Heart right ventricle (tissue), 16 donors: ENCODE measurements at regions of chr21 and their contacts with region 1.

Region 1: DNA sequence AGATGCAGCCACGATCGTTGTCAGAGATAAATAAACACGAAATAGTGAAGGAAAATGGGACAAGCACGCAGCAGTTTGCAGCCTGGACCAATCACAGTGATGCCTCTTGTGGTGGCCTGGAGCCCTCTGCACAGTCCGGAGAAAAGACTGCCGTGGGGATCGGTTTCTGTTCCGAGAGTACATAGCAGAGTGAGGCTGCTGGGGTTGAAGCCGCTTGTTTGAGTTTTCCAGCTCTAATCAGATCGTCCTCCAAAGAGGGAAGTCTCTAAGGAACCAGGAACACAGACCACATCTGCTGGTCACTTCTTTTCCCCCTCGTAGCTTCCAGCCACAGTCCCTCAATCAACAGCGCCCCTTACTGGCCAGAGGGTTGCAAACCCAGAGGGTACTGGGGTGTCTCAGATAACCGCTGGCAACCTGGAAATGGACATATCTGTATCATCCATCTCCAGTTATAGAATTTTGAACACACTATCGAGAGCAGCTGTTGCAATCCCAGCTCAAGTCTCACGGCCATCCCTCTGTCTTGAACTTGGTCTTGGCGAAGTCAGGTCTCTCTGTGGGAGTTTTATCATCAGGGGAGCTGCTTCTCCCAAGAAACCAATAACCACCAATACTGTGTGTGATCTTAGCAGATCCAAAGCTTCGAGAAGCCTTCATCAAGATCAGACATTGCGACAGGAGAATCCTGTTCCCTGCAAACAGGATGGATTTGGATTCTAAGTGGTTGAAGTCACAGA is 57.4 kb downstream of the OLIG1 start:
- DNase-seq: peak; percentile 53 to 61
- ATAC-seq: peak; percentile 70 to 95 (median 90)
- H3K4me3 ChIP-seq: peak overlapping the region in 7 of 10 donors; percentile 21 to 53 (median 43)
- H3K27ac ChIP-seq: no peak overlapping the region
- H3K4me1 ChIP-seq: peaks cover 0 to 13% (median 5%) of the 10 kb centered on the region in 9 donors
- H3K27me3 ChIP-seq: peaks cover 0 to 66% (median 38%) of the 10 kb centered on the region in 7 donors
- CTCF ChIP-seq: peak; percentile 36 to 82 (median 72)

Region 2: DNA sequence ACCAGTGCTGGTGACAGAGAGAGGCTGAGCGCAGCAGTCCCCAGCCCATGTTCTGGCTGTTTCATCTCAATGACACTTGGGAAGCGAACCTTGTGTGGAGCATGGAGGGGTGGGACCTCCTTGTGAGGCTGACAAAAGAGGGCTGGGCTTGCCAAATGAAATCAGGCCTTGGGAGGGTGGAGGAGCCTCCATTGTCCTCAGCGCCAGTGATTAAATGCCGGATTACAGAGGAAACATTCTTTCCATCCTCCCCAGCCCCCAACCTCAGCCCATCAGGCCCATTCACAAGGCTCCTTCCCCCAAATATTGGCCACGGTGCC is 292.4 kb before region 1 on chr21:
- intact Hi-C with region 1: loop called in 3 of 10 experiments (anchors 5 to 10 kb)
- DNase-seq: no peak
- ATAC-seq: no peak
- H3K4me3 ChIP-seq: no peak overlapping the region
- H3K27ac ChIP-seq: no peak overlapping the region
- H3K4me1 ChIP-seq: peaks cover 0 to 5% (median 0%) of the 10 kb centered on the region in 9 donors
- H3K27me3 ChIP-seq: peaks cover 0 to 6% (median 0%) of the 10 kb centered on the region in 7 donors
- CTCF ChIP-seq: no peak

Region 3: GRCh38 chr21:32940079-32941014 is 187.0 kb before region 1 on chr21:
- intact Hi-C with region 1: loop called in 8 of 10 experiments (anchors 2 to 10 kb)
- DNase-seq: peak in 1 of 2 donors; percentile 40
- ATAC-seq: peak in 4 of 8 donors; percentile 51 to 62 (median 56)
- H3K4me3 ChIP-seq: no peak overlapping the region
- H3K27ac ChIP-seq: no peak overlapping the region
- H3K4me1 ChIP-seq: peaks cover 0 to 5% (median 0%) of the 10 kb centered on the region in 9 donors
- H3K27me3 ChIP-seq: peaks cover 0 to 5% (median 0%) of the 10 kb centered on the region in 7 donors
- CTCF ChIP-seq: peak; percentile 52 to 85 (median 79)

Region 4: DNA sequence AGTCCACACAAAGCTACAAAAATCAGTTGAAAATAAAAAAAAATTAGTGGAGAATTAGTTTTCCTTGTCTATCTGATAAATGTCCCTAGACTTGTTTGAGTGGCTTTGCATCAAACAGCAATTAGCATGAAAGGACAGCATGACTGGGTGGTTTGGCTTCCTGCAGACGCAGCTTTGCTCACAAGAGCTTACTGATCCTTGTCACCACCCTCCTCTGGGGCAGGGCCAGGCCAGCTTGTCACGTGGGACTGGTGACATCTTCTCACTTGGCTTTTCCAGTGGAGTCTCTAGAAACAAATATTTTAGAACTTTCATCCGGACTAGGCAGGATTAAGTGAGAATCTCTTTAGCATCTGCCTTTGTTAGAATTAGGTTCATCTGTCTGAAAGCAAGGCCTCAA is 177.6 kb before region 1 on chr21:
- intact Hi-C with region 1: loop called in 5 of 10 experiments (anchors 5 to 10 kb)
- DNase-seq: no peak
- ATAC-seq: no peak
- H3K4me3 ChIP-seq: no peak overlapping the region
- H3K27ac ChIP-seq: no peak overlapping the region
- H3K4me1 ChIP-seq: no peaks in the 10 kb centered on the region
- H3K27me3 ChIP-seq: peaks cover 0 to 41% (median 28%) of the 10 kb centered on the region in 7 donors
- CTCF ChIP-seq: no peak

Region 5: GRCh38 chr21:32994305-32994704 is 133.0 kb before region 1 on chr21:
- intact Hi-C with region 1: loop called in 6 of 10 experiments (anchors 5 to 10 kb)
- DNase-seq: no peak
- ATAC-seq: no peak
- H3K4me3 ChIP-seq: no peak overlapping the region
- H3K27ac ChIP-seq: no peak overlapping the region
- H3K4me1 ChIP-seq: no peaks in the 10 kb centered on the region
- H3K27me3 ChIP-seq: peaks cover 0 to 32% (median 16%) of the 10 kb centered on the region in 7 donors
- CTCF ChIP-seq: peak in 7 of 9 donors; percentile 8 to 57 (median 46)

Region 6: GRCh38 chr21:33011462-33011861 is 115.9 kb before region 1 on chr21:
- intact Hi-C with region 1: loop called in 1 of 10 experiments (anchors 10 kb)
- DNase-seq: no peak
- ATAC-seq: no peak
- H3K4me3 ChIP-seq: no peak overlapping the region
- H3K27ac ChIP-seq: no peak overlapping the region
- H3K4me1 ChIP-seq: peaks cover 0 to 24% (median 0%) of the 10 kb centered on the region in 9 donors
- H3K27me3 ChIP-seq: peaks cover 0 to 77% (median 38%) of the 10 kb centered on the region in 7 donors
- CTCF ChIP-seq: no peak